Activated CD8-positive, alpha-beta T cell treated with anti-CD3 and anti-CD28 coated beads, Interleukin-2, amount 10 ng/mL, durations not matched to agents 7 days and 5 days (primary cell): ENCODE measurements at regions of chr3 and their contacts with region 1.

Region 1: DNA sequence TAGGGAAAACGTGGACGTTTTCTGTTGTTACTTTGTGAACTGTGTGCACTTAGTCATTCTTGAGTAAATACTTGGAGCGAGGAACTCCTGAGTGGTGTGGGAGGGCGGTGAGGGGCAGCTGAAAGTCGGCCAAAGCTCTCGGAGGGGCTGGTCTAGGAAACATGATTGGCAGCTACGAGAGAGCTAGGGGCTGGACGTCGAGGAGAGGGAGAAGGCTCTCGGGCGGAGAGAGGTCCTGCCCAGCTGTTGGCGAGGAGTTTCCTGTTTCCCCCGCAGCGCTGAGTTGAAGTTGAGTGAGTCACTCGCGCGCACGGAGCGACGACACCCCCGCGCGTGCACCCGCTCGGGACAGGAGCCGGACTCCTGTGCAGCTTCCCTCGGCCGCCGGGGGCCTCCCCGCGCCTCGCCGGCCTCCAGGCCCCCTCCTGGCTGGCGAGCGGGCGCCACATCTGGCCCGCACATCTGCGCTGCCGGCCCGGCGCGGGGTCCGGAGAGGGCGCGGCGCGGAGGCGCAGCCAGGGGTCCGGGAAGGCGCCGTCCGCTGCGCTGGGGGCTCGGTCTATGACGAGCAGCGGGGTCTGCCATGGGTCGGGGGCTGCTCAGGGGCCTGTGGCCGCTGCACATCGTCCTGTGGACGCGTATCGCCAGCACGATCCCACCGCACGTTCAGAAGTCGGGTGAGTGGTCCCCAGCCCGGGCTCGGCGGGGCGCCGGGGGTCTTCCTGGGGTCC is at the start of gene TGFBR2:
- DNase-seq: peak; percentile 93
- ATAC-seq: peak; percentile 75
- H3K4me3 Mint-ChIP-seq: peak within 1 kb of the TSS; percentile 94
- H3K27ac Mint-ChIP-seq: peak within 1 kb of the TSS; percentile 98
- H3K4me1 Mint-ChIP-seq: peaks cover 64% of the 10 kb centered on the region
- H3K27me3 Mint-ChIP-seq: no peaks in the 10 kb centered on the region
- total RNA-seq, gene TGFBR2: 62.7 to 64.5 TPM

Region 2: GRCh38 chr3:30634761-30635735 is 28.6 kb after region 1 on chr3:
- CTCF ChIA-PET with region 1: interaction called, 91 read pairs
- POLR2A ChIA-PET with region 1: interaction called, 39 read pairs
- DNase-seq: no peak
- ATAC-seq: no peak
- H3K4me3 Mint-ChIP-seq: peak overlapping the region; percentile 31
- H3K27ac Mint-ChIP-seq: peak overlapping the region; percentile 85
- H3K4me1 Mint-ChIP-seq: peaks cover 97% of the 10 kb centered on the region
- H3K27me3 Mint-ChIP-seq: no peaks in the 10 kb centered on the region

Region 3: GRCh38 chr3:30644593-30645012 is 38.1 kb after region 1 on chr3:
- CTCF ChIA-PET with region 1: interaction called, 7 read pairs
- POLR2A ChIA-PET with region 1: interaction called, 30 read pairs
- DNase-seq: peak; percentile 76
- ATAC-seq: peak; percentile 65
- H3K4me3 Mint-ChIP-seq: peak overlapping the region; percentile 59
- H3K27ac Mint-ChIP-seq: peak overlapping the region; percentile 93
- H3K4me1 Mint-ChIP-seq: peaks cover 98% of the 10 kb centered on the region
- H3K27me3 Mint-ChIP-seq: no peaks in the 10 kb centered on the region

Region 4: DNA sequence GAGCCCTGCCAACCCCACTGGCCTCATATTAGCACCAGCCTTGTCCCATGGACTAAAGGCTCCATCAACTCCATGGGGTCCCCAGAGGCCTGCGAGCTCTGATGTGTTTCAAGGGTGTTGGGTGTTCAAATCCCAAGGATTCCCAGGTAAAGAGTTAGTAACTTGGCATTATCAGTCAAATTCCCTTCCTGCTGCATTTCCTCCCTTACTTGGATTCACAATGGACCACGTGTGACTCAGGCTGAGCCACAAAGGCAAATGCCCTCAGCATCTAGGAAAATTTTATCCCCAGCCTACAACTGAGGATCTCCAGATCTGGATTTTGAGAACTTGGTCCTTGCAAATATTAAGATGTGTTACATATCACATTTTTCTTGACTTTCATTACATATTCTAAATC is 229.2 kb after region 1 on chr3:
- CTCF ChIA-PET with region 1: no interaction called
- POLR2A ChIA-PET with region 1: no interaction called
- DNase-seq: no peak
- ATAC-seq: no peak
- H3K4me3 Mint-ChIP-seq: no peak overlapping the region
- H3K27ac Mint-ChIP-seq: no peak overlapping the region
- H3K4me1 Mint-ChIP-seq: no peaks in the 10 kb centered on the region
- H3K27me3 Mint-ChIP-seq: peaks cover 2% of the 10 kb centered on the region